HEK293 (cell line): ENCODE measurements at regions of chr15 and their contacts with region 1.

Region 1: GRCh38 chr15:55637086-55637485 is 48.9 kb upstream of the PYGO1 start:
- H3K4me3 ChIP-seq: no peak overlapping the region
- H3K27ac ChIP-seq: no peak overlapping the region
- H3K4me1 ChIP-seq: no peaks in the 10 kb centered on the region
- CTCF ChIP-seq: no peak

Region 2: DNA sequence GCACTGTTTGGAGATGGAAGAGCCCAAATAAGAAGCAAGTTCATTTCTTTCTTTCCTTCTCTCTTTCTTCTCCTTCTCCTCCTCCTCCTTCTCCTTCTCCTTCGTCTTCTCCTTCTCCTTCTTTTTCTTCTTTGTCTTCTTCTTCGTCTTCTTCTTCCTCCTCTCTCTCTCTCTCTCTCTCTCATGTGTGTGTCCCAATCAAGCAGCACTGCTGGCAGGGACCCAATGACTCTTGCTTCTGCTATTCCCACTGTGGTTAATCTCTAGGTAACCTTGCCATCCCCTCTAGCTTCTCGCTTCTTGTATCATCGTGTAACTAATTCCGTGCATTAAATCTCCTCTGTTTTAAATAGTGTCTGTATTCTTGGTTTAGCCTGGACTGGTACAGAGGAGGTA is 1122.4 kb after region 1 on chr15:
- CTCF ChIA-PET with region 1: interaction called, 10 read pairs
- POLR2A ChIA-PET with region 1: no interaction called
- H3K4me3 ChIP-seq: no peak overlapping the region
- H3K27ac ChIP-seq: no peak overlapping the region
- H3K4me1 ChIP-seq: no peaks in the 10 kb centered on the region
- CTCF ChIP-seq: no peak